Naive thymus-derived CD4-positive, alpha-beta T cell (primary cell): ENCODE measurements at regions of chr14 and their contacts with region 1.

Region 1: DNA sequence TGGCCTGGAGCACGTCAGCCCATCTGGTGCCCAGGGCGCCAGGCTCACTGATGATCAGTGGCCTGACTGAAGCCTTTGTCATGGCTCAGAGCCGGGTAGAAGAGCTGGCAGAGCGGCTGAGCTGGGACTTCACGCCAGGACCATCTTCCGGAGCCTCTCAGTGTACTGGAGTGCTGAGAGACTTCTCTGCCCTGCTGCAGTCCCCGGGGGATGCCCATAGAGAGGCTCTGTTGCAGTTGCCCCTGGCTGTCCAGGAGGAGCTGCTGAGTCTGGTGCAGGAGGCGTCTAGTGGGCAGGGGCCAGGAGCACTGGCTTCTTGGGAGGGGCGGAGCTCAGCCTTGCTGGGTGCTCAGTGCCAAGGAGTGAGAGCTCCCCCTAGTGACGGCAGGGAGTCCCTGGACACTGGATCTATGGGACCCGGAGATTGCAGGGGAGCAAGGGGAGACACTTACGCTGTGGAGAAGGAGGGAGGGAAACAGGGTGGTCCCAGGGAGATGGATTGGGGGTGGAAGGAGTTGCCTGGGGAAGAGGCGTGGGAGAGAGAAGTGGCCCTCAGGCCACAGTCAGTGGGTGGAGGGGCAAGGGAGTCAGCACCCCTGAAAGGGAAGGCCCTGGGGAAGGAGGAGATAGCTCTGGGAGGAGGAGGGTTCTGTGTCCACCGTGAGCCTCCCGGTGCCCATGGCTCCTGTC is 2.0 kb downstream of the KHNYN start:
- DNase-seq: peak; percentile 76 to 91 (median 86)
- ATAC-seq: peak; percentile 77
- H3K4me3 ChIP-seq: peak overlapping the region; percentile 96
- H3K4me3 Mint-ChIP-seq: peak overlapping the region; percentile 82 to 96 (median 91)
- H3K27ac ChIP-seq: peak overlapping the region; percentile 99
- H3K27ac Mint-ChIP-seq: peak overlapping the region; percentile 51 to 97 (median 96)
- H3K4me1 ChIP-seq: peaks cover 24 to 41% of the 10 kb centered on the region in 2 donors
- H3K4me1 Mint-ChIP-seq: peaks cover 19 to 59% (median 53%) of the 10 kb centered on the region in 7 donors
- H3K27me3 ChIP-seq: no peaks in the 10 kb centered on the region
- H3K27me3 Mint-ChIP-seq: no peaks in the 10 kb centered on the region

Region 2: GRCh38 chr14:24141097-24141880 is 290.4 kb before region 1 on chr14 and contains the start of gene EMC9:
- CTCF ChIA-PET with region 1: no interaction called
- POLR2A ChIA-PET with region 1: no interaction called
- intact Hi-C with region 1: loop called in 1 of 2 experiments (anchors 1 kb)
- DNase-seq: peak; percentile 90 to 100 (median 99)
- ATAC-seq: peak; percentile 94
- H3K4me3 ChIP-seq: peak within 1 kb of the TSS; percentile 87
- H3K4me3 Mint-ChIP-seq: peak within 1 kb of the TSS; percentile 85 to 100 (median 94)
- H3K27ac ChIP-seq: peak within 1 kb of the TSS; percentile 83
- H3K27ac Mint-ChIP-seq: peak within 1 kb of the TSS; percentile 83 to 96 (median 93)
- H3K4me1 ChIP-seq: peaks cover 33 to 43% of the 10 kb centered on the region in 2 donors
- H3K4me1 Mint-ChIP-seq: peaks cover 47 to 87% (median 77%) of the 10 kb centered on the region in 7 donors
- H3K27me3 ChIP-seq: no peaks in the 10 kb centered on the region
- H3K27me3 Mint-ChIP-seq: no peaks in the 10 kb centered on the region
- total RNA-seq, gene EMC9: 9.0 to 25.5 (median 22.3) TPM

Region 3: GRCh38 chr14:24310646-24311604 is 120.8 kb before region 1 on chr14 and contains the start of gene LTB4R:
- CTCF ChIA-PET with region 1: interaction called, 16 read pairs
- POLR2A ChIA-PET with region 1: interaction called, 54 read pairs
- intact Hi-C with region 1: loop called (anchors 1 kb)
- DNase-seq: peak; percentile 61 to 79 (median 73)
- ATAC-seq: peak; percentile 85
- H3K4me3 ChIP-seq: peak within 1 kb of the TSS; percentile 50
- H3K4me3 Mint-ChIP-seq: peak within 1 kb of the TSS; percentile 77 to 91 (median 85)
- H3K27ac ChIP-seq: peak within 1 kb of the TSS; percentile 76
- H3K27ac Mint-ChIP-seq: peak within 1 kb of the TSS; percentile 86 to 95 (median 89)
- H3K4me1 ChIP-seq: peaks cover 60 to 65% of the 10 kb centered on the region in 2 donors
- H3K4me1 Mint-ChIP-seq: peaks cover 58 to 79% (median 72%) of the 10 kb centered on the region in 7 donors
- H3K27me3 ChIP-seq: no peaks in the 10 kb centered on the region
- H3K27me3 Mint-ChIP-seq: no peaks in the 10 kb centered on the region
- total RNA-seq, gene LTB4R: 14.1 to 28.8 (median 26.3) TPM

Region 4: GRCh38 chr14:24339284-24340151 is 92.2 kb before region 1 on chr14 and contains the start of gene RIPK3:
- CTCF ChIA-PET with region 1: interaction called, 317 read pairs
- POLR2A ChIA-PET with region 1: interaction called, 293 read pairs
- intact Hi-C with region 1: loop called in 1 of 2 experiments (anchors 1 kb)
- DNase-seq: peak; percentile 48 to 72 (median 69)
- ATAC-seq: peak; percentile 90
- H3K4me3 ChIP-seq: peak within 1 kb of the TSS; percentile 96
- H3K4me3 Mint-ChIP-seq: peak within 1 kb of the TSS; percentile 90 to 99 (median 96)
- H3K27ac ChIP-seq: peak within 1 kb of the TSS; percentile 74
- H3K27ac Mint-ChIP-seq: peak within 1 kb of the TSS; percentile 81 to 98 (median 95)
- H3K4me1 ChIP-seq: peaks cover 17 to 18% of the 10 kb centered on the region in 2 donors
- H3K4me1 Mint-ChIP-seq: peaks cover 22 to 35% (median 30%) of the 10 kb centered on the region in 7 donors
- H3K27me3 ChIP-seq: peaks cover 0 to 5% of the 10 kb centered on the region in 2 donors
- H3K27me3 Mint-ChIP-seq: peaks cover 6 to 42% (median 8%) of the 10 kb centered on the region in 5 donors
- total RNA-seq, gene RIPK3: 19.9 to 47.5 (median 36.8) TPM

Region 5: GRCh38 chr14:24411443-24412389 is 20.0 kb before region 1 on chr14:
- CTCF ChIA-PET with region 1: interaction called, 3 read pairs
- POLR2A ChIA-PET with region 1: interaction called, 9 read pairs
- intact Hi-C with region 1: loop called in 1 of 2 experiments (anchors 1 kb)
- DNase-seq: peak in 3 of 9 donors; percentile 26 to 31 (median 28)
- ATAC-seq: peak; percentile 68
- H3K4me3 ChIP-seq: no peak overlapping the region
- H3K4me3 Mint-ChIP-seq: no peak overlapping the region
- H3K27ac ChIP-seq: no peak overlapping the region
- H3K27ac Mint-ChIP-seq: no peak overlapping the region
- H3K4me1 ChIP-seq: no peaks in the 10 kb centered on the region
- H3K4me1 Mint-ChIP-seq: no peaks in the 10 kb centered on the region
- H3K27me3 ChIP-seq: no peaks in the 10 kb centered on the region
- H3K27me3 Mint-ChIP-seq: peaks cover 0 to 6% (median 0%) of the 10 kb centered on the region in 5 donors

Region 6: DNA sequence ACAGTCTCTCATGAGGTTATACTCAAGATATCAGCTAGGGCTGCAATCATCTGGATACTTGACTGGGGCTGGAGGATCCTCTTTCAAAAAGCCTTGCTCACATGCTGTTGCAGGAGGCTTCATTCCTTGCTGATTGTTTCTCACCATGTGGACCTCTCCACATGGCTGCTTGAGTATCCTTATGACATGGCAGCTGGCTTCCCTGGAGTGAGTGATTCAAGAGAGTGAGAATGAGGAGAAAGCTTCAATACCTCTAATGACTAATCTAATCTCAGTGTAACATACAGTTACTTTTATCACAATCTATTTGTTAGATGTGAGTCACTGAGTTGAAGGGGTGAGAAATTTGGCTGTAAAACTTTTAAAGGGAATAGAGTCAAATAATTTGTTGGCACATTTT is 25.3 kb after region 1 on chr14:
- CTCF ChIA-PET with region 1: no interaction called
- POLR2A ChIA-PET with region 1: no interaction called
- intact Hi-C with region 1: no loop called
- DNase-seq: no peak
- ATAC-seq: no peak
- H3K4me3 ChIP-seq: no peak overlapping the region
- H3K4me3 Mint-ChIP-seq: no peak overlapping the region
- H3K27ac ChIP-seq: no peak overlapping the region
- H3K27ac Mint-ChIP-seq: no peak overlapping the region
- H3K4me1 ChIP-seq: no peaks in the 10 kb centered on the region
- H3K4me1 Mint-ChIP-seq: peaks cover 0 to 6% (median 0%) of the 10 kb centered on the region in 7 donors
- H3K27me3 ChIP-seq: no peaks in the 10 kb centered on the region
- H3K27me3 Mint-ChIP-seq: no peaks in the 10 kb centered on the region

Region 7: DNA sequence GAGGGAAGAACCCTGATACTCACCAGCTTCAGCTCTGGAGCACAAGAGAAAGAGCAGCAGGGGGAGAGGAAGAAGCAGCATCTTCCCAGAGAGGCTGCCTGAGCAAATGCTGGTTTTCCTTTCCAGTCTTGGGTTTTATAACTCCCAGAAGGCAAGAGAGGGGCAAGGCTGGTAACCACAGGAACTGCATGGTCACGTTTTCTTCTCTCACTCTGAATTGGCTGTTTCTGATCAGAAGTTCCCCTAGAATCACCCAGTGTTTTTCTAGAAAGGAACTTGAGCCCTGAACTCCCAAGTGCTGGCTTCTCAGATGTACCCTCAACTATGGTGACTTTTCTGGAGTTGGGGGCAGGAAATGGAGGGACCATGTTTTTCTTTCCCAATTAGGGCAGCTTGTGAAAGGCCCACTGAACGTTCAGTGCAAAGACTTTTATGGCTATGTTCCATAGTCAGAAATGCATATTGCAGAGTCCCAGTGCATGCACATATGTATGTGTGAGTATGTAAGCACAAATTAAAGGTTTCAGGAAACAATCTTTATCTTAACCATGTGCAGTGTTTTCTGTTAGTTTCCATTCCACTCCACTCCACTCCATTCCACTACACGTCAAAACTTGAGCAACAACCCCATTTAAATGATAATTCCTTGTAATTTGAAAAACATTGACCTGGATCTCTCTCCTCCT is 76.6 kb after region 1 on chr14 and contains the start of gene CMA1:
- CTCF ChIA-PET with region 1: no interaction called
- POLR2A ChIA-PET with region 1: no interaction called
- intact Hi-C with region 1: no loop called
- DNase-seq: no peak
- ATAC-seq: no peak
- H3K4me3 ChIP-seq: no peak within 1 kb of the TSS
- H3K4me3 Mint-ChIP-seq: no peak within 1 kb of the TSS
- H3K27ac ChIP-seq: no peak within 1 kb of the TSS
- H3K27ac Mint-ChIP-seq: no peak within 1 kb of the TSS
- H3K4me1 ChIP-seq: no peaks in the 10 kb centered on the region
- H3K4me1 Mint-ChIP-seq: peaks cover 0 to 3% (median 0%) of the 10 kb centered on the region in 7 donors
- H3K27me3 ChIP-seq: no peaks in the 10 kb centered on the region
- H3K27me3 Mint-ChIP-seq: peaks cover 8 to 32% (median 16%) of the 10 kb centered on the region in 5 donors
- total RNA-seq, gene CMA1: 0.56 TPM in 1 of 5 experiments, not detected in the others